HCT116 (cell line): ENCODE measurements at regions of chr18 and their contacts with region 1.

Region 1: DNA sequence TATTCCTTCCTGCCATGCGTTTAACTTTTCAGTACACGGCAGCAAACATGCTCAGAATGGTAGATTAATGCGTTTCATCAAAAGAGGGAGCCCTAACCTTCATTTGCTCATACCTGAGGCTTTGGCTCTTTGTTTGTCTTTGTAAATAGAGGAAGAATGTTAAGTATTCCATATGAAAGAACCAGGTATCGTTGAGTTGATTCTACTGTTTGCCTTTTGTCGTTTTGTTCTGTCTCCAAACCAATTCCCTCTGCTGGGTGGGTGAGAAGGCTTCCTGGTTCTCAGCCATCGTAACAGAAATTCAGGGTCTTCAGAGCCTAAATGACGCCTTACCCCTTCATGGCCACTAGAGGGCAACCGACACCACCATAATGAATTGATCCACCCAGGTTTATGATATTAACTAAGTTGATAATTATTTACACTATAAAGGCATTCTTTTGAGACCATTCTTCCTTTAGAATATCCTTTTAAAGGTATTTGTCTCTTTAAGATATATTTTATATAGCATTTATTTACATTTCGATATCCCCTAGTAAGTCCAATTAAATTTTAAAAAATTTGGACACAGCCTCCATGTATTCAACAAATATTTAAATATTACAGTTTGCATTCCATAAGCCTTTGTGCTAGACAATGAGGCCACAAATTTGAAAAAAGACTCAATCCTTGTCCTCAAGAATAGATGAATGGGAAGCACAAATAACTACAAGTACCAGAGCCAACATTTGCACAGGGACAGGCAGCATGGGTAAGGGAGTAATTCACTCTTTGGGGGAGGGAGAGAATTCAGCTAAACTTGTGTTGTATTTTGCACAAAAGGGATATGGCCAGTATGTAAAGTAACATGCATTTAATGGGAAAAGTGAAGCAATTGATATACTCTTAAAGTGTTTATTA is 48.1 kb downstream of the TIMM21 start:
- DNase-seq: peak; percentile 42
- ATAC-seq: peak; percentile 89
- H3K4me3 ChIP-seq: peak overlapping the region; percentile 27 to 51
- H3K27ac ChIP-seq: no peak overlapping the region
- H3K4me1 ChIP-seq: peaks cover 0 to 4% of the 10 kb centered on the region in 2 experiments; a peak in 1 of 4 replicates
- H3K27me3 ChIP-seq: peaks cover 4% of the 10 kb centered on the region; the same call in 1 of the 2 replicates
- CTCF ChIP-seq: peak; percentile 77 to 96 (median 90)
- POLR2A ChIP-seq: no peak
- RAD21 ChIP-seq: peak; percentile 80

Region 2: GRCh38 chr18:73101977-73102376 is 1094.5 kb before region 1 on chr18:
- CTCF ChIA-PET with region 1: no interaction called
- POLR2A ChIA-PET with region 1: no interaction called
- RAD21 ChIA-PET with region 1: no interaction called
- intact Hi-C with region 1: no loop called
- DNase-seq: no peak
- ATAC-seq: no peak
- H3K4me3 ChIP-seq: no peak overlapping the region
- H3K27ac ChIP-seq: no peak overlapping the region
- H3K4me1 ChIP-seq: no peaks in the 10 kb centered on the region
- H3K27me3 ChIP-seq: no peaks in the 10 kb centered on the region
- CTCF ChIP-seq: no peak
- POLR2A ChIP-seq: no peak
- RAD21 ChIP-seq: no peak

Region 3: DNA sequence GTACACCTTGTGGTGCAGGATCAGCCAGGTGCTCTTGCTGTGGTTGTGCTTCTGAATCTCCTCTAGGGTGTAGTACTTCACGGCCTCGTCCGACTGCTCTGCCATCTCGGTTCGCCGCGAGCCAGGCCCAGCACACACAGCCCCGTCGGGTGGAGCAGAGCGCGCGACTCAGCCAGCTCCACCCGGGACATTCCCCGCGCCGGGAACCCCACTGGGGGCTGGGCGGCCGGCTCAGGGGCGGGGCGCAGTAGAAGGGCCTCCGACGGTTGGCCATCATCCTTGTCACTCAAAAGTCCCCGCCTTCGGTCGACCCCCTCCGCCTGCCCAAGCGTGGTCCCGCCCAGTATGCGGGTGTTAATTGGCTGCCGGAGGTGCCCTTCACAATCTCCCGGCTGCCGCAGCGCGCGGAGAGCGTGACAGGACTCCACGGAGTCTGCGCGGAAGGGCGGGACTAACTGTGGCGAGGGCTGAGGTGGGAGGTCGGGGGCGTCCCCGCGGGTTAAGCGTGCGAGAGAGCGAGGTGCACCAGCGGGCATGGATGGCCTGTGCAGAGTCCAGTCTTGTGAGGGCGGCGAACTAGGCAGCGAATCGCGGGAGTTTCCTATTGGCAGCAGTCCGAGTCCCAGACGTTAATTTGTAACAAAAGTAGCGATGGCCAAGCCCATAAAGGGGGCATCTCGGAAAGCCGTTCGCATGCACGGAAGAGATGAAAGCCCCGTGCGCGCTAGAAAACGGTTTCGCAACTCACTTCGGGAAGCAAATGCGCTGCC is 95.5 kb after region 1 on chr18 and contains the start of gene CYB5A:
- CTCF ChIA-PET with region 1: no interaction called
- POLR2A ChIA-PET with region 1: no interaction called
- RAD21 ChIA-PET with region 1: no interaction called
- intact Hi-C with region 1: loop called (anchors 5 kb)
- DNase-seq: peak; percentile 83
- ATAC-seq: peak; percentile 96
- H3K4me3 ChIP-seq: peak within 1 kb of the TSS; percentile 62 to 75
- H3K27ac ChIP-seq: peak within 1 kb of the TSS; percentile 20; the same call in 1 of the 2 replicates
- H3K4me1 ChIP-seq: peaks cover 7 to 19% of the 10 kb centered on the region in 2 experiments; a peak in 3 of 4 replicates
- H3K27me3 ChIP-seq: no peaks in the 10 kb centered on the region
- CTCF ChIP-seq: 0 out of 6 replicates have a peak, but pooled peaks of 1 of the 3 experiments have one; percentile 7
- POLR2A ChIP-seq: no peak
- RAD21 ChIP-seq: no peak
- total RNA-seq, gene CYB5A: 37.7 TPM

Region 4: GRCh38 chr18:74476140-74476539 is 279.7 kb after region 1 on chr18:
- CTCF ChIA-PET with region 1: no interaction called
- POLR2A ChIA-PET with region 1: no interaction called
- RAD21 ChIA-PET with region 1: no interaction called
- intact Hi-C with region 1: loop called (anchors 5 kb)
- DNase-seq: no peak
- ATAC-seq: peak; percentile 93
- H3K4me3 ChIP-seq: no peak overlapping the region
- H3K27ac ChIP-seq: no peak overlapping the region
- H3K4me1 ChIP-seq: no peaks in the 10 kb centered on the region
- H3K27me3 ChIP-seq: peaks cover 7% of the 10 kb centered on the region; the same call in 1 of the 2 replicates
- CTCF ChIP-seq: peak; percentile 33 to 81 (median 69); a peak in 5 of 6 replicates
- POLR2A ChIP-seq: no peak
- RAD21 ChIP-seq: peak; percentile 54

Region 5: GRCh38 chr18:74551936-74552555 is 355.6 kb after region 1 on chr18:
- CTCF ChIA-PET with region 1: interaction called, 9 read pairs
- POLR2A ChIA-PET with region 1: no interaction called
- RAD21 ChIA-PET with region 1: interaction called in 1 of 2 experiments, 4 read pairs
- intact Hi-C with region 1: loop called (anchors 1 kb)
- DNase-seq: peak; percentile 72
- ATAC-seq: peak; percentile 100
- H3K4me3 ChIP-seq: no peak overlapping the region
- H3K27ac ChIP-seq: no peak overlapping the region
- H3K4me1 ChIP-seq: no peaks in the 10 kb centered on the region
- H3K27me3 ChIP-seq: peaks cover 18% of the 10 kb centered on the region
- CTCF ChIP-seq: peak; percentile 67 to 80 (median 77)
- POLR2A ChIP-seq: no peak
- RAD21 ChIP-seq: peak; percentile 77